Ascending aorta (tissue), 2 donors: ENCODE measurements at regions of chr11 and their contacts with region 1.

Region 1: DNA sequence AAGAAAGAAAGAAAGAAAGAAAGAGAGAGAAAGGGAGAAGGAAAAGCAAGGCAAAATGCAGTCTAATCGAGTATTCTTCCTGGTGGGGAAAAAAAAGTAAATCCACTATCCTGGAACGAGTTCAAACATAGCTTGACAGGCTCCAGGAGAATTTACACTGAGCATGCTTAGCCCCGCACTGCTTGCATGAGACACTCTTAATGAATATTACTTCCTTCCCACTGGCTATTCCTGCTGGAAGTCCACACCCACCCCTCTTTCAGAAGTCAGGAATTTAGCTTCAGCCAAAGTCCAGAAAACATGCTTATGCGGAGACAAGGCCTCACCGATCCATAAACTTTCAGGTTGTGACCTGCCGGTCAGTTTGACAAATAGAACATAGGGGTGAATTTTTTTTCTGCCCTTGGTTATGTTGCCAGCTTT is 251.8 kb upstream of the BLID start:
- DNase-seq: peak in 1 of 2 donors; percentile 71
- H3K4me3 ChIP-seq: peak overlapping the region in 1 of 2 donors; percentile 62
- H3K27ac ChIP-seq: peak overlapping the region; percentile 71 to 82
- H3K4me1 ChIP-seq: peaks cover 0 to 10% of the 10 kb centered on the region in 2 donors
- H3K27me3 ChIP-seq: no peaks in the 10 kb centered on the region
- CTCF ChIP-seq: no peak

Region 2: GRCh38 chr11:122287401-122287800 is 80.4 kb before region 1 on chr11:
- intact Hi-C with region 1: no loop called
- DNase-seq: no peak
- H3K4me3 ChIP-seq: no peak overlapping the region
- H3K27ac ChIP-seq: no peak overlapping the region
- H3K4me1 ChIP-seq: peaks cover 0 to 3% of the 10 kb centered on the region in 2 donors
- H3K27me3 ChIP-seq: no peaks in the 10 kb centered on the region
- CTCF ChIP-seq: no peak

Region 3: DNA sequence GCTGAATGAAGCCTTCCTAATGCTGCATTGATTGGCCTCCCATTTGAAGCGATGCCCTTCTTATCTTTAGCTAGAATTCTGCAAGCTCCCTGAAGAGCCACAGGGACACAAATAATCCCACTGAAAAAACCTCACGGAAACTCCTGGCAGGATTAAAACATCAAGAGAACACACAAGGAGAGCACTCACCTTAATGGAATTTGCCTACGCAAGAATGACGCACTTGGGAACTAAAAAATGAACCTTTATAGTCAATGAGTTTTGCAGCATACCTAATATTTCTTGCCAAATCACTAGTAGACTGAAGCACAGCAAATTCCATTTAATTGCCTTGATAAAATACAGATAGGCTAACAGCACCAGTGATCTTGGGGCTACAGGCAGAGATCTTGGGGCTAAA is 54.9 kb after region 1 on chr11:
- intact Hi-C with region 1: no loop called
- DNase-seq: no peak
- H3K4me3 ChIP-seq: no peak overlapping the region
- H3K27ac ChIP-seq: no peak overlapping the region
- H3K4me1 ChIP-seq: peaks cover 0 to 12% of the 10 kb centered on the region in 2 donors
- H3K27me3 ChIP-seq: no peaks in the 10 kb centered on the region
- CTCF ChIP-seq: no peak

Region 4: DNA sequence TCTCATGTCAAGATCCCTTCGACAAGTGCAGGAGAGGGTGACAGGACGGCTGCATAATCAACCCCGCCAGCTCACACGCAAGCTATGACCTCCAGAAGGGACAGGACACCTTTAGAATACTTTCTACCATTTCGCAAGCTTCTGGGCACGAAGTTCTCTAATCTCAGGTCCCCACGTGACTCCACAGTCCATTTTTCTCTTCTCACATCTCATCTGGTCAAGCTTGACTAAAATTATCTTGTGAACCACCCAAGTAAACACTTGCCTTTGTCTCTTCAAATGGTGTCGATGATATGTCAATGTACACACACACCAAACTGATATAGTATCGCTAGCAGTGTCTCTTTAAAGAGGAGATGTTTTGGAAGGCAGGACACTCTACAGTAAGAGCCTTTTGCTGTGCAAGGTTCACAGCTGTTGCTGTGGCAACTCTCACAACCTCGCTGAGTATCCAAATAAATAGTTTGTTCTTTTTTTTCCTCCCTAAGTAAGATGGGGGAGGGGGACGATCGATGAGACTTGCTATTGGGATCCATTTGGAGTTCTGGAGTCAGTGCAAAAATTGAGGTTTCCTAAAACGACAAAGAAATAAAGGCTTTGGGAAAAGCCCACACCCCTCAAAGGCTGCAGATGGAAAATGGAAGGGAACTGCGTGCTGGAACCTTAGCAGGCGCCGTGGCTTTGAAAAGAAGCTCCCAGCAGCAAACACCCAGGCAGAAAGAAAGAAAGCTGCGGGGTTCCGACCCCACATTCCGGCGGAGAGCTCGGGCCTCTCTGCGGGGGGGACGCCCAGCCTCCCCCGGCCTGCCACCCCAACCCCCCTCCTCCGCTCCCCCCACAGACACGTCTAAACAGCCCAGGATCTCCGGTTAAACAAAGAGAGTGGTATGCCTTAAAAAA is 72.3 kb after region 1 on chr11:
- intact Hi-C with region 1: loop called (anchors 5 kb)
- DNase-seq: no peak
- H3K4me3 ChIP-seq: peak overlapping the region; percentile 56 to 83
- H3K27ac ChIP-seq: peak overlapping the region; percentile 43 to 46
- H3K4me1 ChIP-seq: peaks cover 4 to 6% of the 10 kb centered on the region in 2 donors
- H3K27me3 ChIP-seq: no peaks in the 10 kb centered on the region
- CTCF ChIP-seq: no peak